ENCODE measurements at regions of chr6 and their contacts with region 1.

Region 1: DNA sequence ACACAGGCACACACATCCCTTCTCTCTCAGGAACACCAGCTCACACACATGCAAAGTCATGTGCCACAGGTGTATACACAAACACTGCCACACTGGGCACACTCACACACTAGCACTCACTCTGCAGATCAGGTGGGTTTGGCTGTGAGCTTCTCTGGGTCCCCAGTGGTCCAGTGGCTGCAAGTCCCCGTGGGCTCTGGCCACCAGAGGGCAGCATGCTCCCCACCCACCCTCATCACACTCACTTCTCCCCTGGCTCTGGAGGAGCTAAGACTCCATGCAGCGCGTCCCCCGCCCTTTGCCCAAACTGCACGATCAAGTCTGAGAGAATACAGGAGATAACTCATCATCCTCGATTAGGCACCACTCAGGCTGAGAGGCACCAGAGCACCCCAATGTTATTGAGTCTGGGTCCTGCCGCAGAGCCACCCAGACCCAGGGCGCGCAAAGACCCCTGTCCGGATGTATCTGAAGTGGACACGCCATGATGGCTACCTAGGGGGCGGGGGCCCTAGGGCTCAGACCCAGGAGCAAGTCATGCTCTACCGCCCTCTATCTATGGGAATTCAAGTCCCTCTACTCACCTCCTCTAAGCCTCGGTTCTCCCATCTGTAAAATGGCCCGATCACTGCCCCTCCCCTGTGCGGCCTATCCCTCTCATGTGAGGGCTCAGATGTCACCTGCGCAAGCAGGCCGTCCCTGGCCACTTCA is 90.5 kb downstream of the GRM4 start:
- DNase-seq: peak; percentile 74
- ATAC-seq: peak; percentile 80
- H3K4me3 Mint-ChIP-seq: no peak overlapping the region
- H3K27ac Mint-ChIP-seq: no peak overlapping the region
- H3K4me1 Mint-ChIP-seq: no peaks in the 10 kb centered on the region
- H3K27me3 Mint-ChIP-seq: peaks cover 8% of the 10 kb centered on the region

Region 2: GRCh38 chr6:33547499-33547898 is 507.9 kb before region 1 on chr6:
- CTCF ChIA-PET with region 1: no interaction called
- DNase-seq: no peak
- ATAC-seq: no peak
- H3K4me3 Mint-ChIP-seq: no peak overlapping the region
- H3K27ac Mint-ChIP-seq: peak overlapping the region; percentile 78
- H3K4me1 Mint-ChIP-seq: peaks cover 31% of the 10 kb centered on the region
- H3K27me3 Mint-ChIP-seq: no peaks in the 10 kb centered on the region

Region 3: DNA sequence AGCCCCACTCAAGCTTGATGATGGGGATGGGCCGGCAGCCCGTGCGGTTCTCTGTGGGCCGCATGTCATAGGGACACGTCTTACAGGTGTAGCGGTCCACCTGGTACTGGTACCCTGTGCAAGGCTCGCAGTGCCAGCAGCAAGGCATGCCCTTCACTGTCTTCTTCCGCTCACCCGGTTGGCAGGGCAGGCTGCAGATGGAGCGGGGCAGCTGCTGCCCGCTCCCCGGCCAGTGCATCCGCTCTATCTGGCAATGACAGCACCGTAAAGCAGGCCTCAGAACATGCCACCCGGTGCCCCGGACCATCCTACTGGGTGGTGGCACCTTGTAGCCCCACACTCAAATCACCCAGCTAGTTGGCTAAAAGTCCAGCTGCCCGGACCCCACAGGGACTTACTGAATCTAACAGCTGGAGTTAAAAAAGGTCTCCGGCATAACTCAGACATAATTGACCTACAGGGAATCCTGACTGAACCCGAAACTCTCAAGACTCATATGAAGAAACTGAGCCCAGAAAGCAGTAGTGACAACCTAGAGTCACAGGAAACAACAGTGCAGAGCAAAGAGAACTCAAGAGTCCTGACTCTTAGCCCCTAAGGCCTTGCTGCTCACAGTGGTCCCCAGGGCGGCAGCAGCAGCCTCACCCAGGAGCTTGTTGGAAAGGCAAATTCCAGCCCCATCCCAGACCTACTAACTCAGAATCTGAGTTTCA is 18.9 kb before region 1 on chr6:
- CTCF ChIA-PET with region 1: interaction called, 15 read pairs
- DNase-seq: peak; percentile 47
- ATAC-seq: peak; percentile 88
- H3K4me3 Mint-ChIP-seq: no peak overlapping the region
- H3K27ac Mint-ChIP-seq: peak overlapping the region; percentile 50
- H3K4me1 Mint-ChIP-seq: peaks cover 25% of the 10 kb centered on the region
- H3K27me3 Mint-ChIP-seq: peaks cover 8% of the 10 kb centered on the region

Region 4: GRCh38 chr6:34044945-34045595 is 10.3 kb before region 1 on chr6:
- CTCF ChIA-PET with region 1: interaction called, 13 read pairs
- DNase-seq: peak; percentile 81
- ATAC-seq: peak; percentile 90
- H3K4me3 Mint-ChIP-seq: no peak overlapping the region
- H3K27ac Mint-ChIP-seq: no peak overlapping the region
- H3K4me1 Mint-ChIP-seq: peaks cover 17% of the 10 kb centered on the region
- H3K27me3 Mint-ChIP-seq: peaks cover 15% of the 10 kb centered on the region

Region 5: GRCh38 chr6:34154668-34155447 is 99.5 kb after region 1 on chr6:
- CTCF ChIA-PET with region 1: interaction called, 42 read pairs
- DNase-seq: peak; percentile 67
- ATAC-seq: peak; percentile 85
- H3K4me3 Mint-ChIP-seq: no peak overlapping the region
- H3K27ac Mint-ChIP-seq: no peak overlapping the region
- H3K4me1 Mint-ChIP-seq: peaks cover 4% of the 10 kb centered on the region
- H3K27me3 Mint-ChIP-seq: peaks cover 72% of the 10 kb centered on the region

Region 6: GRCh38 chr6:34496103-34496685 is 440.8 kb after region 1 on chr6:
- CTCF ChIA-PET with region 1: no interaction called
- DNase-seq: no peak
- ATAC-seq: no peak
- H3K4me3 Mint-ChIP-seq: no peak overlapping the region
- H3K27ac Mint-ChIP-seq: no peak overlapping the region
- H3K4me1 Mint-ChIP-seq: no peaks in the 10 kb centered on the region
- H3K27me3 Mint-ChIP-seq: peaks cover 8% of the 10 kb centered on the region

Measured in activated CD8-positive, alpha-beta memory T cell treated with anti-CD3 and anti-CD28 coated beads, Interleukin-2, amount 10 ng/mL, durations not matched to agents 7 days and 5 days (primary cell).